ENCODE measurements at regions of chr1 and their contacts with region 1.

Region 1: DNA sequence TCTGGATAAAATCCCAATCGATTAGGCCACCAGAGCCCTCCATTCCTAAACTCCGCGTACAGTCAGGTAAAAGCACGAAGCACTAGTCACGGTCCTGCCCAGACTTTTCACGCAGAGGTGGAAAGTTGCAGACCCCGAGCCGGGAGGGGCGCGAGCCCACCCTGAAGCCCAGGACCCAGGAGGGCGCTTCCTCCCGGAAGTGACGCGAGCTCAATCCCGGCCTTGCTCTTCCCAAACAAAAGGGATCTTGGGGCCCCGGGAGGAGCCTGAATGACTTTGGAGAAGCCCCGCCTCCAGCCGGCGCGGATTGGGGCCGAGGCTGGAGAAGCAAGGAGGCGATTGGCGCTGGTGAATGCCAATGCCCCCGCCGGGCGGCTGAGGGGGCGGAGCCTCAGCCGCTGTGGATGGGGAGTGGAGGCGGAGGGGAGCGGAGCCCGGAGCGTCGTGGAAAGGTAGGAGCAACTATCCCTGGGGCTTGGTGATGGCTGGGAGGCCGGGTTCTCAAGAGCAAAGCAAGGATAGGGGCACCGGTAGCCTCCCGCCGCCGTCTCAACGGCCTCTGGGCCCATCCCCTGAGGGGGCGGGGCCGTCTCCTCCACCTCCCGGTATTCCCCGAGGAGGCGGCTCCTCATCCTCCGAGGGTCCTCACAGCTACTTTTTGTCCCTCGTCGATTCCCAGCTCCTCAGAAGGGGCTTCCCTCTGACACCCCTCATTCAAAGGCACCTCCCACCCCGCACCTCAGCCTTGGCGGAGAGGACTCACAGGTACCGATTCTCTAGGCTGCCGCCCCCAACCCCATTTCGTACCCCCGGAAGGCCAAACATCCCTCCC is at the start of gene CTTNBP2NL:
- DNase-seq: peak; percentile 90
- ATAC-seq: peak; percentile 93
- H3K4me3 Mint-ChIP-seq: peak within 1 kb of the TSS; percentile 86
- H3K27ac Mint-ChIP-seq: peak within 1 kb of the TSS; percentile 69
- H3K4me1 Mint-ChIP-seq: peaks cover 28% of the 10 kb centered on the region
- H3K27me3 Mint-ChIP-seq: peaks cover 14% of the 10 kb centered on the region
- total RNA-seq, gene CTTNBP2NL: 2.9 to 3.3 TPM

Region 2: DNA sequence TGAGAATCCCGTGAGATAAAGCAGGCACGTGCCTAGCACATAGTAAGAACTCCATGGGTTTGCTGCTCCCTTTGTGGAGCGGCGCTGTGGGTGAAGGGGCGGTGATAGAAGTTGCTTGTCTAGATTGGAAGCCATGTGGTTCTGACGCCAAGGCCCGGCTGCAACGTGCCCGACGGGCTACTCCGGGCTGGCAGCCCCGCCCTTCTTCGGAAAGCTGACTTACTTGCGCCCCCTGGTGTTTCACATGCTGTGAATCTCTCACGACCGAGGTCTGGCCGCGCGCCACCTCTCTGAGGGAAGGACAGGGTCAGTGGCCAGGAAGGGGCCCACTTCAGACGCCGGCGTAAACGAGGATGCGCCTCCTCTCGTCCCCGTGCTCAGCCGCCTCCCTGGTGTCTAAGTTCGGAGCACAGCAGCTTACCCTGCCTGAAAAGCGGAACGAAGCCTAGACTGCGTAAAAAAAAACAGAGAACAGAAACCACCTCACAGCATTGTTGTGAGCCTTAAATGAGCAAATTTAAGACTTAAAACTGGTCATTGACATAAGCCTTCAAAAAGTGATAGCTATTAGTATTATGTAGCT is 70.1 kb after region 1 on chr1:
- CTCF ChIA-PET with region 1: interaction called, 58 read pairs
- POLR2A ChIA-PET with region 1: interaction called, 3 read pairs
- intact Hi-C with region 1: loop called in 1 of 2 experiments (anchors 1 kb)
- DNase-seq: peak; percentile 93
- ATAC-seq: peak; percentile 97
- H3K4me3 Mint-ChIP-seq: peak overlapping the region; percentile 67
- H3K27ac Mint-ChIP-seq: peak overlapping the region; percentile 83
- H3K4me1 Mint-ChIP-seq: peaks cover 12% of the 10 kb centered on the region
- H3K27me3 Mint-ChIP-seq: peaks cover 15% of the 10 kb centered on the region

Region 3: DNA sequence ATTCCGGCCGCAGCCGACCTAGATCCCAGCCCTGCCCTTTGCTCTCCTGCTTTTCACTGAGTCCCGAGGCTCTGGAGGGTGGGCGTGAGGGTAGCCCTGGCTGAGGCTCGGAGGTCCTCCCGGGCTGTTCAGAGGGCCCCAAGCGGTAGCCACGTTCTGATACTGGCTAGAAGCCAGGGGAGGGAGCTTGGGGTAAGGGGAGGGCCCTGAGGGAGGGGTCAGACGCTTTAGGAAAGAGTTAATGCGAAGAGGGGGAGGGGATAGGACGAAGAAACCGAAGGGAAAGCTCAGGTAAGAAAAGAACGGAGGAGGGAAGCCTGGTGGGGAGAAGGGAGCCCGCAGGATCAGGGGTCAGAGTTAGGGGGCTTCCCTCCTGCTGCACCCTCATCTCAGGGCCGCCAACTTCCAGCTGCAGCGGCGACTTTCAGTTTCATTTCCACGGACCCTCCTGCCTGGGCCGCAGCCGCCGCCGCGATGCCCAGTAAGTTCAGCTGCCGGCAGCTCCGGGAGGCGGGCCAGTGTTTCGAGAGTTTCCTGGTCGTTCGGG is 278.5 kb after region 1 on chr1 and contains the start of gene MOV10:
- CTCF ChIA-PET with region 1: interaction called, 3 read pairs
- POLR2A ChIA-PET with region 1: interaction called, 3 read pairs
- intact Hi-C with region 1: loop called in 1 of 2 experiments (anchors 2 kb)
- DNase-seq: peak; percentile 77
- ATAC-seq: peak; percentile 83
- H3K4me3 Mint-ChIP-seq: peak within 1 kb of the TSS; percentile 88
- H3K27ac Mint-ChIP-seq: peak within 1 kb of the TSS; percentile 92
- H3K4me1 Mint-ChIP-seq: peaks cover 43% of the 10 kb centered on the region
- H3K27me3 Mint-ChIP-seq: no peaks in the 10 kb centered on the region
- total RNA-seq, gene MOV10: 80.3 to 87.5 TPM

Region 4: DNA sequence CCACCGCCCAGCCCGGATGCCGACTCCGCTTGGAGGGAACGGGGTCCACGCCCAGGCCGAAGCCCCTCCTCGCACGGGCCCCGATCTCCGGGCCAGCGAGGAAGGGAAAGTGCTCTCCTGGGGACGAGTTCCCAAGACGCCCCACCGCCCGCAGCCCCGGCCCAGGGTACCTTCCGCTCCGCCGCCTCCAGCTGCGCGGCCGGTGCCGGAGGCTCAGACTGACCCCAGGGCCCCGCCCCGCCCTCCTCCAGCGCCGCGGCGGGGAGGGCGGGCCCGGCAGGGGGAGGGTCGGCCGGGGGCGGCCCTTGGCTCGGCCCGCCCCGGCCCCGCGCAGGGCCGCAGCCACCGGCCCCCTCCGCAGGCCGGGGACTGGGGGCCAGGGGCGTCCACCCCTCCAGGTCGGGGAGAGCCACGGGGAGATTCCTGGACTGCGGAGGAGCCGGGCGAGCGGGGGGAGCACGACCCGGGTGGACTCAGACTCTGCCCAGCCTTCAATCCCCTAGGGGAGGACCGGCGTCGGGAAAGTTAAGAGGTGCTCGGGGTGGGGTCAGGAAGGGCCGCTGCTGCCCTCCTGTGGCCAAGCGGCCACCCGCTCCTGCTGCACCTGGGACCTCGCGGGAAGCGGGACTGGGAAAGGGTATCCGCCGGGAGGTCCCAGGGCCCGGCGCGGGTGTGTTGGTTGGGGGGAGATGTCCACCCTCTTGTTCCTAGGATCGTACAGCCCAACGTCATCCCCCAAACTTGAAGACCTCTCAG is 311.0 kb after region 1 on chr1 and contains the start of gene RHOC:
- CTCF ChIA-PET with region 1: interaction called, 17 read pairs
- POLR2A ChIA-PET with region 1: no interaction called
- intact Hi-C with region 1: loop called (anchors 1 to 2 kb)
- DNase-seq: peak; percentile 85
- ATAC-seq: peak; percentile 43
- H3K4me3 Mint-ChIP-seq: peak within 1 kb of the TSS; percentile 58
- H3K27ac Mint-ChIP-seq: peak within 1 kb of the TSS; percentile 45
- H3K4me1 Mint-ChIP-seq: peaks cover 48% of the 10 kb centered on the region
- H3K27me3 Mint-ChIP-seq: peaks cover 2% of the 10 kb centered on the region
- total RNA-seq, gene RHOC: 32.8 to 45.7 TPM

Region 5: DNA sequence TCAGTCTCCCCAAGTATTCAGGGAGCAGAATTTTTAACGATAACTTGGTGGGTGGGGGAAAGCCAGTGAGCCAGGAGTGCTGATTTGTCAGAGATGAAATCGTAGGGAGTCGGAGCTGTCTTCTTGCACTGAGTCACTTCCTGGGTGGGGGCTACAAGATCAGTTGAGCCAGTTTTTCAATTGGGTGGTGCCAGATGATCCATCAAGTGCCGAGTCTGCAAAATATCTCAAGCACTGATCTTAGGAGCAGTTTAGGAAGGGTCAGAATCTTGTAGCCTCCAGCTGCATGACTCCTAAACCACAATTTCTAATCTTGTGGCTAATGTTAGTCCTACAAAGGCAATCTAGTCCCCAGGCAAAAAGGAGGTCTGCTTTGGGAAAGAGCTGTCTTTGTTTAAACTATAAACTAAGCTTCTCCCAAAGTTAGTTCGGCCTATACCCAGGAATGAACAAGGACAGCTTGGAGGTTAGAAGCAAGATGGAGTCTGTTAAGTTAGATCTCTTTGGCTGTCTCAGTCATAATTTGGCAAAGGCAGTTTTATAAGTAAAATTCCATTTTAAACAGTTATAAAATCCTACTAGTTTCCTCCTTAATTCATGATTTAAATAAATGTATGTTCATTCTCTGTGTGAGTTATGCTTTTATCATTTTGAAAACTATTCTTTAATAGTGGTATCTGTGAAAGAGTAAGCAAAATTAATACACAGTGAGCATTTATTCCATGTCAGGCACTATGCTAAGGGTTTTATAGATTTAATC is 508.2 kb after region 1 on chr1:
- CTCF ChIA-PET with region 1: no interaction called
- POLR2A ChIA-PET with region 1: no interaction called
- intact Hi-C with region 1: loop called in 1 of 2 experiments (anchors 1 kb)
- DNase-seq: peak; percentile 80
- ATAC-seq: peak; percentile 96
- H3K4me3 Mint-ChIP-seq: no peak overlapping the region
- H3K27ac Mint-ChIP-seq: peak overlapping the region; percentile 83
- H3K4me1 Mint-ChIP-seq: peaks cover 41% of the 10 kb centered on the region
- H3K27me3 Mint-ChIP-seq: no peaks in the 10 kb centered on the region